Lower lobe of right lung (tissue), 2 donors: ENCODE measurements at regions of chr22 and their contacts with region 1.

Region 1: GRCh38 chr22:36977947-36978660 is 41.1 kb downstream of the TST start:
- DNase-seq: peak; percentile 94
- ATAC-seq: peak; percentile 98
- H3K4me3 ChIP-seq: peak overlapping the region; percentile 52
- H3K27ac ChIP-seq: peak overlapping the region; percentile 60
- H3K4me1 ChIP-seq: peaks cover 8% of the 10 kb centered on the region
- H3K27me3 ChIP-seq: no peaks in the 10 kb centered on the region
- CTCF ChIP-seq: peak; percentile 92

Region 2: DNA sequence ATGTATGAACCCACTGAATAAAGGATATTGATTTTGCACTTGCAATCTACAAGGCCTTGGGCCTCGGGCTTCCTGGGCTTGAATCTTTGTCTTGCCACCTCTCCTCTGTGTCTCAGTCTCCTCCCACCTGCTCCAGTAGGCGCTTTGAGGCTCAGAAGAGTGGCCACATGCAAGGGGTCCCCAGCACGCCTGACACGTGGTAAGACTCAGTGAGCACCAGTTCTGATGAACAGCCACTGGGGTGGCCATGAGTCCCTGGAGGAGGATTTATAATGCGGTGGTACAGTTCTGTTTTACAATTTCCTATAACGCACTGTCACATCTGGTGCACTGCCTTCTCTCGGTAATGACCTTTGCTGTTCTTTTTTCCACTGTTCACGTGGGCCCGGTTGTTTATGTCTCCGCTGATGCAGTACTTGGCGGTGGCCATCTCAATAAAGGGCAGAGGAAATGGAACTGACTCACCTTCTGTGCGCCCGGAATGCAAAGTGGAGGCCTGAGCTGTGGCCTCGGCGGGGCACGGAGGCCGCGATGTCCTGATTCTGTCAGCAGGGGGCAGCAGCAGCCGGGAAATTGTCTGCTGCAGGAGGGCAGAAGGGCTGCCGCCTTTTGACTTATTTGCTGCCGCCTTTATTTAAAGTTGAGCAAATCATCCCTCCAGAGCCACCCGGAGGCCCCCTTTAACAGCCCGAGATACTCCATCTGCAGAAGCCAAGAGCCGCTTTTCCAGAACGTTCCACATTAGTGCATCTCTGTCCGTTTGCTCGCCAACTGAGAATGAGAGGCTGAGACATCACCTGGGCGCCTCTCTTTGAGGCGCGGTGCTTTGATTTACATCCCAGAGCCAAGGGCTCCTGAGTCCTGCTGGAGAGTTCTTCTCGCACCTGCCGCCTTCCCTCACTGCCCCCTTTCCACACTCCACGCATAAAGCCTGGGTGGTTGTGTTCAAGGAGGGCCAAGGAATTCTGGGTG is 196.2 kb before region 1 on chr22:
- intact Hi-C with region 1: loop called (anchors 10 kb)
- DNase-seq: peak; percentile 85
- ATAC-seq: peak; percentile 92 to 94
- H3K4me3 ChIP-seq: no peak overlapping the region
- H3K27ac ChIP-seq: peak overlapping the region; percentile 10
- H3K4me1 ChIP-seq: peaks cover 9% of the 10 kb centered on the region
- H3K27me3 ChIP-seq: peaks cover 15% of the 10 kb centered on the region
- CTCF ChIP-seq: peak; percentile 93

Region 3: DNA sequence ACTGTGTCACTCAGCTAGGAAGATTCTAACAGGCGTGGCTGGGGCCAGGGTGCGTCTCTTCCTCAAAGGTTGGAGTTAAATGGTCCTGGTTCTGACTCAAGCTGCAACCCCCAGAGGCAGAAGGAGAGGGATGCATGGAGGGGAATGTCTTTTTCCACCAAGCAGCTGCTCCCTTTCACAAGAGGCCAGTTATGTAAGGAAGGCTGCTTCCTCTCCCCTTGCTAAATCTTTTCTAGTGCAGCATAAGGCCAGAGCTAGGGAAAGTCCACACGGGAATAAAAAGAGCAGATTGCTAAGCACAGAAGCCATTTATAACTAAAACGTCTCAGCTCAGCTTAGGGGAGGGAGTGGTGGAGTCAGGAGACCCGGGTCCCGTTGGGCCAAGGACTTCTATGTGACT is 171.3 kb before region 1 on chr22:
- intact Hi-C with region 1: no loop called
- DNase-seq: no peak
- ATAC-seq: no peak
- H3K4me3 ChIP-seq: no peak overlapping the region
- H3K27ac ChIP-seq: no peak overlapping the region
- H3K4me1 ChIP-seq: no peaks in the 10 kb centered on the region
- H3K27me3 ChIP-seq: peaks cover 16% of the 10 kb centered on the region
- CTCF ChIP-seq: no peak